ENCODE measurements at regions of chr5 and their contacts with region 1.

Region 1: GRCh38 chr5:38193015-38193581 is 65.3 kb upstream of the EGFLAM start:
- DNase-seq: peak; percentile 88

Region 2: GRCh38 chr5:37400501-37400900 is 792.6 kb before region 1 on chr5:
- intact Hi-C with region 1: loop called in 1 of 2 experiments (anchors 10 kb)
- DNase-seq: no peak

Region 3: DNA sequence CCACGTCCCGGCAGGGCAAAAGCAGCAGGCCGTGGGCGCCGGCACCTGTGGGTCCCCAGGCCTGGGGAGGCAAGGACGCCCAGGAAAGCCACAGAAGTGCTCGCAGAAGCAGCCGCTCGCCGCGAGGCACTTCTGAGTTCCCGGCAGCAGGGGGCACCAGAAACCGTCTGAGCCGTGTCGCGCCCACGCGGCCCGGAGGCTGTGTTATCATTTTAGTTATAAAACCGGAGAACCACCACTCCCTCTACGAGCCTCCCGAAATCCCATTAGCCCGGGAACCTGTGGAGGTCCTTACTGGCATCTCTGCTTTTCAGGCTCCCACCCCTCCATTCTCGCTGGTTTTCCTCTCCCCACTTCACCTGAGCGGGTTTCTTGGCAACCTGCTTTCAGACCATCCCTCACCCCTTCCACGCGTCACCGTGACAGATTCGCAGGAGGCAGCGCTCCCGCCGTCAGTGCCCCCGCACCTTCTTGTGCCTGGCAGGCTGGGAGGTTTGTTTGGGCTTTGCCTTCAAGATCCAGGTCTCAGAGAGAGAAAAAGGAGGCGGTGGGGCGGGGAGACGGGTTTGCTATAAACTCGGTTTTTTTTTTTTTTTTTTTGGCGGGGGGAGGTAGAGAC is 355.6 kb before region 1 on chr5:
- intact Hi-C with region 1: loop called (anchors 5 kb)
- DNase-seq: peak; percentile 93